Motor neuron (in vitro differentiated cells): ENCODE measurements at regions of chr4 and their contacts with region 1.

Region 1: GRCh38 chr4:89657931-89658700 is 178.8 kb downstream of the SNCA start:
- ATAC-seq: peak in 3 of 8 experiments; percentile 37 to 49 (median 41)
- H3K4me3 ChIP-seq: no peak overlapping the region
- H3K27ac ChIP-seq: no peak overlapping the region
- H3K4me1 ChIP-seq: peaks cover 0 to 17% of the 10 kb centered on the region in 2 donors

Region 2: GRCh38 chr4:89275587-89275986 is 382.5 kb before region 1 on chr4:
- in situ Hi-C with region 1: no loop called
- ATAC-seq: no peak
- H3K4me3 ChIP-seq: no peak overlapping the region
- H3K27ac ChIP-seq: no peak overlapping the region
- H3K4me1 ChIP-seq: no peaks in the 10 kb centered on the region

Region 3: DNA sequence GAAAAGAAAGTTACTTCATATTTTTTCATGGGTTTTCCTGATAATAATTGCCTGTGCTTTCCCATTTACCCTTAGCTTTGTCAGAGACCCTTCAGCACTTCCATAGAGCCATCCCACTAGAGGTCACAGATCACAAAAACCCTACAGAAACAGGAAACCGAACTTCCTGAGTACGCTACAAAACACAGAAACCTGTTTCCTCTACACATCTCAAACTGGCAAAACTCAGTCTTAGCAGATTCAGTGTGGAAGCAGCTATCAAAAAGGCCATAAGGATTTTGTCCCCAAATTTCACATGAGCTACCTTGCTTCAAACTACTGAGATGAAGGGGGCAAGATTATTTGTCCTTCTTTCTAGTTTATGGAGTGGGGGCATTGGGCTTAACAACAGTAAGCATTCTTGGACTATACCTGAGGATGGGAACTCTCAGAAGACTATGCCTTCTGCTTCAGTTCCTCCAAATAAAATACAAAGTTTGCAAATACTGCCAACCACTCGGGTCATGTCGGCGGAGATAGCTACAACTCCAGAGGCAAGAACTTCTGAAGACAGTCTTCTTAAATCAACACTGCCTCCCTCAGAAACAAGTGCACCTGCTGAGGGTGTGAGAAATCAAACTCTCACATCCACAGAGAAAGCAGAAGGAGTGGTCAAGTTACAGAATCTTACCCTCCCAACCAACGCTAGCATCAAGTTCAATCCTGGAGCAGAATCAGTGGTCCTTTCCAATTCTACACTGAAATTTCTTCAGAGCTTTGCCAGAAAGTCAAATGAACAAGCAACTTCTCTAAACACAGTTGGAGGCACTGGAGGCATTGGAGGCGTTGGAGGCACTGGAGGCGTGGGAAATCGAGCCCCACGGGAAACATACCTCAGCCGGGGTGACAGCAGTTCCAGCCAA is 236.8 kb after region 1 on chr4 and contains the start of gene MMRN1:
- in situ Hi-C with region 1: loop called in 1 of 9 experiments (anchors 25 kb)
- ATAC-seq: no peak
- H3K4me3 ChIP-seq: no peak within 1 kb of the TSS
- H3K27ac ChIP-seq: no peak within 1 kb of the TSS
- H3K4me1 ChIP-seq: no peaks in the 10 kb centered on the region
- total RNA-seq, gene MMRN1: 0.07 to 17.1 (median 0.79) TPM in 6 of 8 experiments, not detected in the others